CD4-positive, alpha-beta T cell (primary cell): ENCODE measurements at regions of chr16 and their contacts with region 1.

Region 1: GRCh38 chr16:21565861-21566669 is 33.3 kb upstream of the METTL9 start:
- DNase-seq: peak in 1 of 14 experiments; percentile 13
- ATAC-seq: no peak
- H3K4me3 ChIP-seq: no peak overlapping the region
- H3K4me3 Mint-ChIP-seq: no peak overlapping the region
- H3K27ac ChIP-seq: no peak overlapping the region
- H3K27ac Mint-ChIP-seq: no peak overlapping the region
- H3K4me1 ChIP-seq: peaks cover 3% of the 10 kb centered on the region
- H3K4me1 Mint-ChIP-seq: no peaks in the 10 kb centered on the region
- H3K27me3 ChIP-seq: no peaks in the 10 kb centered on the region
- H3K27me3 Mint-ChIP-seq: no peaks in the 10 kb centered on the region
- CTCF ChIP-seq: no peak

Region 2: GRCh38 chr16:20928774-20929411 is 637.2 kb before region 1 on chr16:
- CTCF ChIA-PET with region 1: no interaction called
- POLR2A ChIA-PET with region 1: no interaction called
- intact Hi-C with region 1: loop called in 1 of 2 experiments (anchors 10 kb)
- DNase-seq: no peak
- ATAC-seq: no peak
- H3K4me3 ChIP-seq: no peak overlapping the region
- H3K4me3 Mint-ChIP-seq: no peak overlapping the region
- H3K27ac ChIP-seq: no peak overlapping the region
- H3K27ac Mint-ChIP-seq: no peak overlapping the region
- H3K4me1 ChIP-seq: no peaks in the 10 kb centered on the region
- H3K4me1 Mint-ChIP-seq: no peaks in the 10 kb centered on the region
- H3K27me3 ChIP-seq: no peaks in the 10 kb centered on the region
- H3K27me3 Mint-ChIP-seq: no peaks in the 10 kb centered on the region
- CTCF ChIP-seq: no peak

Region 3: GRCh38 chr16:21053590-21053989 is 512.5 kb before region 1 on chr16:
- CTCF ChIA-PET with region 1: no interaction called
- POLR2A ChIA-PET with region 1: no interaction called
- intact Hi-C with region 1: no loop called
- DNase-seq: no peak
- ATAC-seq: no peak
- H3K4me3 ChIP-seq: no peak overlapping the region
- H3K4me3 Mint-ChIP-seq: no peak overlapping the region
- H3K27ac ChIP-seq: no peak overlapping the region
- H3K27ac Mint-ChIP-seq: no peak overlapping the region
- H3K4me1 ChIP-seq: no peaks in the 10 kb centered on the region
- H3K4me1 Mint-ChIP-seq: no peaks in the 10 kb centered on the region
- H3K27me3 ChIP-seq: peaks cover 5 to 8% of the 10 kb centered on the region in 2 experiments
- H3K27me3 Mint-ChIP-seq: peaks cover 48% of the 10 kb centered on the region
- CTCF ChIP-seq: no peak